ENCODE measurements at regions of chr11 and their contacts with region 1.

Region 1: GRCh38 chr11:72683782-72684200 is 9.6 kb upstream of the PDE2A start:
- DNase-seq: peak; percentile 33
- ATAC-seq: peak; percentile 81
- H3K4me3 ChIP-seq: no peak overlapping the region
- H3K27ac ChIP-seq: no peak overlapping the region
- H3K4me1 ChIP-seq: no peaks in the 10 kb centered on the region
- H3K27me3 ChIP-seq: no peaks in the 10 kb centered on the region
- CTCF ChIP-seq: peak; percentile 92
- EP300 ChIP-seq: no peak
- POLR2A ChIP-seq: 0 out of 4 replicates have a peak, but pooled peaks of 1 of the 2 experiments have one; percentile 19
- RAD21 ChIP-seq: no peak

Region 2: GRCh38 chr11:72585762-72586311 is 98.0 kb before region 1 on chr11:
- CTCF ChIA-PET with region 1: interaction called, 6 read pairs
- POLR2A ChIA-PET with region 1: no interaction called
- in situ Hi-C with region 1: no loop called
- intact Hi-C with region 1: loop called (anchors 1 kb)
- DNase-seq: peak; percentile 44
- ATAC-seq: peak; percentile 60
- H3K4me3 ChIP-seq: no peak overlapping the region
- H3K27ac ChIP-seq: no peak overlapping the region
- H3K4me1 ChIP-seq: no peaks in the 10 kb centered on the region
- H3K27me3 ChIP-seq: peaks cover 12 to 56% of the 10 kb centered on the region in 2 experiments
- CTCF ChIP-seq: peak; percentile 95
- EP300 ChIP-seq: no peak
- POLR2A ChIP-seq: no peak
- RAD21 ChIP-seq: peak; percentile 71

Region 3: GRCh38 chr11:72793425-72794367 is 109.9 kb after region 1 on chr11 and contains the start of gene STARD10:
- CTCF ChIA-PET with region 1: no interaction called
- POLR2A ChIA-PET with region 1: no interaction called
- in situ Hi-C with region 1: no loop called
- intact Hi-C with region 1: no loop called
- DNase-seq: peak; percentile 90
- ATAC-seq: peak; percentile 87
- H3K4me3 ChIP-seq: peak within 1 kb of the TSS; percentile 71 to 80 (median 76)
- H3K27ac ChIP-seq: peak within 1 kb of the TSS; percentile 65
- H3K4me1 ChIP-seq: peaks cover 55% of the 10 kb centered on the region
- H3K27me3 ChIP-seq: no peaks in the 10 kb centered on the region
- CTCF ChIP-seq: peak; percentile 95
- EP300 ChIP-seq: 0 out of 4 replicates have a peak, but pooled peaks of 1 of the 2 experiments have one; percentile 8
- POLR2A ChIP-seq: peak in 1 of 2 experiments; percentile 31; a peak in 1 of 4 replicates
- RAD21 ChIP-seq: peak; percentile 93
- total RNA-seq, gene STARD10: 248 and 341 TPM in 2 replicates